ENCODE measurements at regions of chr16 and their contacts with region 1.

Region 1: DNA sequence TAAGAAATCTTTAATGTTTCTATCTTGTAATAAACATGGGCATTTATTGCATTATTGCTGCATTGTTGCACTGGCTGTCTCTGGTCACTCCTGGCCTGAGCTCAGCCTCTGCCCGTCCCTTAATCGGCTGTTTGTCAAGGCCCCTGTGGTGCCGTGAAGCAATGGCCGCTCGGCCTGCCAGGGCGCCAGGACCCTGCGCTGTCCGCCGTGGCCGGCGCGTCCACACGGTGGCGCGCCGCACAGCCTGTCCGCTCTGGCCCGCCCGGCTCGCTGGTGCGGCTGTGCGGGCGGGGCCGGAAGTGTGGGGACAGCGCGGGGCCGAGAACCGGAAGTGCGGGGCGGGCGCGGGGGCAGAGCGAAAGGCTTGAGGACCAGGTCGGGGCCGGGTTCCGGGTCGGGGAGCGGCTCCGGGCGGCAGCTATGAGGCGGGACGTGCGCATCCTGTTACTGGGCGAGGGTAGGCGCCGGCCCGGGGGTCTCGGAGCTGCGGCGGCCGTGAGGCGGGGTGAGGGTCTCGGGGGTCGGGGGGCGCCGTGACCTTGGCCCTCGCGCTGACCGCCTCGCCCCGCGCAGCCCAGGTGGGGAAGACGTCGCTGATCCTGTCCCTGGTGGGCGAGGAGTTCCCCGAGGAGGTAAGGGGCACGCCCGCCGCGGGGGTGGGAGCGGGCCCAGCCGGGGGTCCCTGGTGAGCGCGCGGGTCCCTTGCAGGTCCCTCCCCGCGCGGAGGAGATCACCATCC is at the start of gene RHOT2:
- DNase-seq: peak; percentile 73 to 99 (median 87)
- ATAC-seq: peak; percentile 99
- H3K4me3 ChIP-seq: peak within 1 kb of the TSS; percentile 42
- H3K4me3 Mint-ChIP-seq: peak within 1 kb of the TSS; percentile 71 to 84 (median 80)
- H3K27ac ChIP-seq: peak within 1 kb of the TSS; percentile 75
- H3K27ac Mint-ChIP-seq: peak within 1 kb of the TSS in 8 of 9 donors; percentile 61 to 93 (median 86)
- H3K4me1 ChIP-seq: peaks cover 9 to 12% of the 10 kb centered on the region in 2 donors
- H3K4me1 Mint-ChIP-seq: peaks cover 0 to 10% (median 6%) of the 10 kb centered on the region in 7 donors
- H3K27me3 ChIP-seq: no peaks in the 10 kb centered on the region
- H3K27me3 Mint-ChIP-seq: no peaks in the 10 kb centered on the region
- total RNA-seq, gene RHOT2: 145 to 232 (median 186) TPM

Region 2: GRCh38 chr16:252366-253337 is 415.3 kb before region 1 on chr16:
- CTCF ChIA-PET with region 1: no interaction called
- POLR2A ChIA-PET with region 1: no interaction called
- intact Hi-C with region 1: no loop called
- DNase-seq: peak in 7 of 9 donors; percentile 13 to 56 (median 27)
- ATAC-seq: peak; percentile 61
- H3K4me3 ChIP-seq: peak overlapping the region; percentile 60
- H3K4me3 Mint-ChIP-seq: peak overlapping the region; percentile 81 to 93 (median 86)
- H3K27ac ChIP-seq: peak overlapping the region; percentile 72
- H3K27ac Mint-ChIP-seq: peak overlapping the region; percentile 83 to 98 (median 94)
- H3K4me1 ChIP-seq: peaks cover 9 to 20% of the 10 kb centered on the region in 2 donors
- H3K4me1 Mint-ChIP-seq: peaks cover 12 to 44% (median 28%) of the 10 kb centered on the region in 7 donors
- H3K27me3 ChIP-seq: no peaks in the 10 kb centered on the region
- H3K27me3 Mint-ChIP-seq: no peaks in the 10 kb centered on the region

Region 3: DNA sequence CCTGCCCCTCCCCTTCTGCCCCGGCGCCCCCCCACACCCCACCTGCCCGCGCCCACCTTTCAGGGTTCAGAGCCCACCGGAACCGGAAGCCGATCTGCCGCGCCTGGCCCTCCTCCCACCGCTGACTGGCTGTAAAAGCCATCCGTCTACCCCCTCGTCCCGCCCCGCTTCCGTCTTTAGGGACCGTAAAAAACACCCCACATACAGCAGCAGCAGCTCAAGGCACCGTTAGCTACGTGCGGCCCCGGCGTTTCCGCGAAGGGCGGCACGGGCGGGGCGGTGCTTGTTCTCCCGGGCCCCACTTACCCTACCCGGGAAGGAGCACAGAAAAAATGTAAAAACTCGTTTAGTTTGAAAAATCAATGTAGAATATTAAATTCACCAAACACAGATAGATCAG is 297.5 kb before region 1 on chr16 and contains the start of gene MRPL28:
- CTCF ChIA-PET with region 1: no interaction called
- POLR2A ChIA-PET with region 1: no interaction called
- intact Hi-C with region 1: no loop called
- DNase-seq: peak; percentile 75 to 93 (median 92)
- ATAC-seq: peak; percentile 99
- H3K4me3 ChIP-seq: peak within 1 kb of the TSS; percentile 30
- H3K4me3 Mint-ChIP-seq: peak within 1 kb of the TSS; percentile 81 to 97 (median 90)
- H3K27ac ChIP-seq: peak within 1 kb of the TSS; percentile 67
- H3K27ac Mint-ChIP-seq: peak within 1 kb of the TSS; percentile 80 to 96 (median 89)
- H3K4me1 ChIP-seq: peaks cover 10 to 14% of the 10 kb centered on the region in 2 donors
- H3K4me1 Mint-ChIP-seq: peaks cover 4 to 26% (median 13%) of the 10 kb centered on the region in 7 donors
- H3K27me3 ChIP-seq: no peaks in the 10 kb centered on the region
- H3K27me3 Mint-ChIP-seq: no peaks in the 10 kb centered on the region
- total RNA-seq, gene MRPL28: 21.9 to 86.2 (median 26.5) TPM

Region 4: DNA sequence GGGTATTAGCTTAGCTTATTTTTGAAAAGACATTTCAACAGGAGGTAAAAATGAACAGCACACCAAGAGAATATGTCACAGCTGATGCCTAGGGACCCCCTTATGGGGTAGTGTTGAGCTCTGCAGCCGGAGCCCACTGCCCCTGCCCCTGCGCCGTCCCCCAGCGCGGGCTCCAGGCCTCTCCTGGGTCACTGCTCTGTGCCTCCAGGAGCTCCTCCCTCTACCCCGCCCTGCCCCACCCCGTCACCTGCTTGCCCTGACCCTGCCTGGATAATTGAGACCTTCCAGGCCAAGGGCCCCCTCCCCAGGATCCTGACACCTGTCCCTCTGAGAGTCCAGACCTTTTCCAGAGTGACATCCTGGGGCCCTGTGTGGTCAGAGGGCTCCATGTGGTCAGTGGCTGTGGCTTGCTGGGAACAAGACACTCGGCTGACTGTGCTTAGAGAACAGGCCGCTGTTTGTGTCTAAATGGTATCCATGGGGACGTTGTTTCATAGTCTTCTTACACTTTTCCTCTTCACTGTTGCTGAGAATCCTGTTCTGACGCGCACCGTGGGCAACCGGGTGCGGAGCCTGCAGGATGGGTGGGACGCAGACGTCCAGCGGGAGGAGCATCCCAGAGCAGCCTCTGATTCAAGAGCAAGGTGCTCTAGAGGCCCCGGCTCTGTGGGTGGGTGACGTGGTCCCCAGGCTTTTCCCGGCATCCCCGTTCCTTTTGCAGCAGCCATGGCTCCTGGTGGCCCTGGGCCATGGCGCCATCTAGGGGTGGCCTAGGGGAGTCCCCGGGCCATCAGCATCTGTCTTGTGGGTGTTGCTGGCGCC is 57.2 kb before region 1 on chr16:
- CTCF ChIA-PET with region 1: no interaction called
- POLR2A ChIA-PET with region 1: no interaction called
- intact Hi-C with region 1: no loop called
- DNase-seq: peak; percentile 35 to 58 (median 49)
- ATAC-seq: peak; percentile 87
- H3K4me3 ChIP-seq: no peak overlapping the region
- H3K4me3 Mint-ChIP-seq: no peak overlapping the region
- H3K27ac ChIP-seq: no peak overlapping the region
- H3K27ac Mint-ChIP-seq: peak overlapping the region in 2 of 9 donors; percentile 8 to 79
- H3K4me1 ChIP-seq: no peaks in the 10 kb centered on the region
- H3K4me1 Mint-ChIP-seq: peaks cover 3 to 21% (median 4%) of the 10 kb centered on the region in 7 donors
- H3K27me3 ChIP-seq: no peaks in the 10 kb centered on the region
- H3K27me3 Mint-ChIP-seq: no peaks in the 10 kb centered on the region

Region 5: GRCh38 chr16:648781-649589 is 19.0 kb before region 1 on chr16 and contains the start of gene WDR90:
- CTCF ChIA-PET with region 1: interaction called, 3 read pairs
- POLR2A ChIA-PET with region 1: interaction called, 5 read pairs
- intact Hi-C with region 1: loop called in 1 of 2 experiments (anchors 1 kb)
- DNase-seq: peak; percentile 81 to 94 (median 89)
- ATAC-seq: peak; percentile 96
- H3K4me3 ChIP-seq: peak within 1 kb of the TSS; percentile 77
- H3K4me3 Mint-ChIP-seq: peak within 1 kb of the TSS; percentile 63 to 87 (median 78)
- H3K27ac ChIP-seq: peak within 1 kb of the TSS; percentile 97
- H3K27ac Mint-ChIP-seq: peak within 1 kb of the TSS in 7 of 9 donors; percentile 18 to 88 (median 77)
- H3K4me1 ChIP-seq: peaks cover 6 to 9% of the 10 kb centered on the region in 2 donors
- H3K4me1 Mint-ChIP-seq: peaks cover 4 to 26% (median 10%) of the 10 kb centered on the region in 7 donors
- H3K27me3 ChIP-seq: no peaks in the 10 kb centered on the region
- H3K27me3 Mint-ChIP-seq: no peaks in the 10 kb centered on the region
- total RNA-seq, gene WDR90: 11.7 to 70.6 (median 13.9) TPM

Region 6: DNA sequence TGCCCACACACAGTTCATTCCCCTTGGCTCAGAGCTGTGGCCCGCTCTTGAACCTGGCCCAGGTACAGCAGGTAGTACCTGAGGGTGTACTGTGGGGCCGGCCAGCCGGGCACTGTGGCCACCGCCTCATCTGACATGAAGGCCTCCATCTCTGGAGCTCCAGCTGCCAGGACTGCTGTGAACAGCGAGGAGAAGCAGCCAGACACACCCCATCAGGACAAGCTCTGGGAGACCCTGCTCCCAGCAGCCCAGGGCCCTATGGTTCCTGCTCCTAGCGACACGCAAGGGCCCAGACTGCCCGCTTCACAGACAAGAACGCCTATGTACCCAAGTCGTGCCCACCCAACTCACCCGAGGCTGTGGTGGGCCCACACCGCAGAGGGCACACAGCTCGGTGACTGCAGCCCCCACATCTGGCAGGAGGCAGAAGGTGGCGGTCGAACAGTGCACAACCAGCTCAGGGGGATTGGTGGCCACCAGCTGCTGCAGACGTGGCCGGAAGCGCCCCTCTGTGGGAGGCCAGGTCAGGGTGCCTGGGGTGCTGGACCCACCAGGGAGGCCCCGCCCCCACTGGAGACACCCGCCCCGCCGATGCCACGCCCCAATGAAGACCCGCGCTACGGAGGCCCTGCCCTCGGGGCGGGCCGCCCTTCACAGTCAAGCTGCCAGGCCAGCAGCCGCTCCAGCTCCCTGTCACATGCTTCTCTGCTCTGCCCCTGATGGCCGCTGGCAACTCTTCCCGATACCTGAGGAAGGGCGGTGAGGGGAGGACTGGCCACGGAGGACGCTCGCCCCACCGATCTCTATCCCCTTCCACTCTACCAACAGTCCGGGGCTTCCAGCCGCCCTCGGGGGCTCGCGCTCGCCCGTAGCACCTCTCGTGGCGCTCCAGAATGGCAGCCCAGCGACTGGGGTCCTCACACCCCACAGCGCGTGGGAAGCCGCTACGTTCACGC is 11.2 kb after region 1 on chr16:
- CTCF ChIA-PET with region 1: interaction called, 4 read pairs
- POLR2A ChIA-PET with region 1: interaction called, 11 read pairs
- intact Hi-C with region 1: loop called (anchors 1 to 2 kb)
- DNase-seq: peak in 4 of 9 donors; percentile 41 to 65 (median 47)
- ATAC-seq: peak; percentile 6
- H3K4me3 ChIP-seq: peak overlapping the region; percentile 51
- H3K4me3 Mint-ChIP-seq: peak overlapping the region; percentile 71 to 89 (median 84)
- H3K27ac ChIP-seq: peak overlapping the region; percentile 26
- H3K27ac Mint-ChIP-seq: peak overlapping the region in 7 of 9 donors; percentile 56 to 93 (median 69)
- H3K4me1 ChIP-seq: peaks cover 5 to 17% of the 10 kb centered on the region in 2 donors
- H3K4me1 Mint-ChIP-seq: peaks cover 10 to 33% (median 23%) of the 10 kb centered on the region in 7 donors
- H3K27me3 ChIP-seq: no peaks in the 10 kb centered on the region
- H3K27me3 Mint-ChIP-seq: peaks cover 0 to 7% (median 0%) of the 10 kb centered on the region in 5 donors

Region 7: DNA sequence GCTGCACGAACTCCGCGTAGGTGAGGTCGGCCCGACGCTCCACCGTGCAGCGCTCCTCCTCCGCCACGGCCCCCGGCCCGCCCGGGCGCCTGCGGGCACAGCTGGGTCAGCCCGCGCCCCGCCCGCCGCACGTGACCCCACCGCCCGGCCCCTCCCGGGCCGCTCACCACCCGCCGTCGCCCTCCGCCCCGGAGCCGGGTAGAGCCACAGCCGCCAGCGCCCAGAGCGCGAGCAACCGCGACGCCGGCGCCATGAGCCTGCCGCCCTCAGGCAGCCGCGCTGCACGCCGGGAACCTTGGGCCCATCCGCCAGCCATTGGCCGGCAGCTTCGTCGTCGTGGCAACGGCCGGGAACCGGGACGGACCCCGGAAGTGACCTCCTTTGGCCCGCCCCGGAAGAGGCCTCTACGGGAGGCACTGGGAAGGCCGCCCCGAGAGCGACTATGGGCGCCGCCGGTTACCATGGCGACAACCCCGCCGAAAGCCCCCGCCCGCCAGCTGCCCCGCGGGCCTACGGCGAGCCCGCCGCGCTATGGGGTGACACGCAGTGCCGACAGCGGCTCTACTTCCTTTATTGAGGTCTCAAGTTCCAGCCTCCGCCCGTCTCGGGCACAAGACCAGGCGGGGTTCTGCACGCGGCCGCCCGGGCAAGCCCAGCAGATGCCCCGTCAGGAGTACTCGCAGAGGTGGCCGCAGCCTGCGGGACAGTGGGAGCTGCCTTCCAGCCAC is 16.3 kb after region 1 on chr16 and contains the start of gene JMJD8:
- CTCF ChIA-PET with region 1: interaction called, 4 read pairs
- POLR2A ChIA-PET with region 1: interaction called, 33 read pairs
- intact Hi-C with region 1: loop called (anchors 1 to 2 kb)
- DNase-seq: peak; percentile 88 to 97 (median 91)
- ATAC-seq: peak; percentile 75
- H3K4me3 ChIP-seq: peak within 1 kb of the TSS; percentile 52
- H3K4me3 Mint-ChIP-seq: peak within 1 kb of the TSS; percentile 58 to 87 (median 76)
- H3K27ac ChIP-seq: peak within 1 kb of the TSS; percentile 78
- H3K27ac Mint-ChIP-seq: peak within 1 kb of the TSS in 6 of 9 donors; percentile 38 to 82 (median 58)
- H3K4me1 ChIP-seq: peaks cover 9 to 36% of the 10 kb centered on the region in 2 donors
- H3K4me1 Mint-ChIP-seq: peaks cover 10 to 31% (median 22%) of the 10 kb centered on the region in 7 donors
- H3K27me3 ChIP-seq: no peaks in the 10 kb centered on the region
- H3K27me3 Mint-ChIP-seq: no peaks in the 10 kb centered on the region
- total RNA-seq, gene JMJD8: 26.8 to 48.1 (median 37.2) TPM

Region 8: DNA sequence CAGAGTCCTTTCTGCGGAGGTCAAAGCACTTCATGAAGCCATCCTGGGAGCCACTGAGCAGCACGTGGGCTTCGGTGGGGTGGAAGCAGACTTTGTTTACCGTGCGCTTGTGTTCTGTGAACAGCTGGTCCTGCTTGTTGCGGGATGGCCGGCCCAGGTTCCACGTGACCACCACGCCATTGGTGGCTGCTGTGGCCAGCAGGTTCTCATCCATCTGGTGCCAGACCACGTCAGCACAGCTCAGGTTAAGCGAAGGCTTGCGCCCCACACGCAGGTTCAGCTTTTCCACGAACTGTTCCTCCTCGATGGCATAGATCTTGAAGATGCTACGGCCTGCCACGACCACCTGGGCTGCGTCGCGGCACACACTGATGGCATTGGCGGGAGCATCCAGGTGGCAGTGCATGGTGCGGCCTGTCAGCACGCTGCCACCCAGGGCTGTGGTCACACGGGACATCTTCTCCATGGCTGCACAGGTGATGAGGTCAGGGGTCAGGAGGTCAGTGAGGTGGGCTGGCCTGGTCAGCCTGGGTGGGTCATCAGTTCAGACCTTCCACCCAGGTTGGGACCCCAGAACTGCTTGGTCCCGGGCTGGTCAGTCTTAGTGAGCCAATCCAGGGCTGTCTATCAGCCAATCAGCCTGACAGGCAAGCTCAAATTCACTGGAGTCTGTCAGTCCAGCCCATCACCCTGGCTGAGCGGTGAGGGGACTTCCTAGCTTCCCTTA is 21.4 kb after region 1 on chr16:
- CTCF ChIA-PET with region 1: interaction called, 4 read pairs
- POLR2A ChIA-PET with region 1: interaction called, 33 read pairs
- intact Hi-C with region 1: loop called (anchors 1 to 2 kb)
- DNase-seq: no peak
- ATAC-seq: no peak
- H3K4me3 ChIP-seq: peak overlapping the region; percentile 75
- H3K4me3 Mint-ChIP-seq: peak overlapping the region; percentile 89 to 94 (median 92)
- H3K27ac ChIP-seq: peak overlapping the region; percentile 86
- H3K27ac Mint-ChIP-seq: peak overlapping the region; percentile 87 to 94 (median 90)
- H3K4me1 ChIP-seq: peaks cover 7 to 25% of the 10 kb centered on the region in 2 donors
- H3K4me1 Mint-ChIP-seq: peaks cover 4 to 35% (median 20%) of the 10 kb centered on the region in 7 donors
- H3K27me3 ChIP-seq: no peaks in the 10 kb centered on the region
- H3K27me3 Mint-ChIP-seq: peaks cover 0 to 17% (median 0%) of the 10 kb centered on the region in 5 donors

Measured in naive thymus-derived CD4-positive, alpha-beta T cell (primary cell).